Uterus (tissue), 4 donors: ENCODE measurements at regions of chr15 and their contacts with region 1.

Region 1: DNA sequence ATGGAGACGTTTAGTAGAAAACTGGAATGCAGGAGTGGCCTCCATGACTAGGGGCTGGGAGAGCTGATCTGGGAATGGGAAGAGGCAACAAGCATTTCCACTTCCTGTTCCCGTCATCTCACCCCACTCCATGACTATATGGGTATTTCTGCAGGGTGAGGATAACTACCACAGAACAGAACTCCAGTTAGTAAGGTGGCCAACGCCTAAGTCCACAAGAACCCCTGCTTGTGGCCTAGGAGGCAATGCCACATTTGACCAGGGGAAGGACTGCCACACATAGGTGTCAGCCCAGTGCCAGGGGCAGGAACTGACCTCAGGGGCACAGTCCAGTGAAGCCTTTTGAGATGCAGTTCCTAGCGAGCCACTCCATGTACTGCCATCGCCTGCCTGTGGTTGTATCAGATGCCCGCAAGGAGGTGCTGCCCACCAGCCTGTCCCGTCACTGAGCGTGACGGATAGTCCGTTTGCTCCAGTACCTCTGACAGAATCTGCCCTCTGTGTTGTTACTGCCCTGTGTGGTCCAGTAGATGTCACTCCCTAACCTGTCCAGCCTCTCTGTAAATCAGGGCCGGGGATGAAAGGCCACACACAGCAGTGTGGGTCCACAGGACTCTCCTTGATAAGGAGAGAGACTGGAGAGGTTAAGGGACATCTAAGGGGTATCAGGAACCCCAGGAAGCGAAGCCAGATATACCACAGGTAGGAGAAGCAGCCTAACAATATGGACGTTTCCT is 3.5 kb upstream of the MTFMT start:
- DNase-seq: peak; percentile 53 to 65
- H3K4me3 ChIP-seq: no peak overlapping the region
- H3K27ac ChIP-seq: no peak overlapping the region
- H3K4me1 ChIP-seq: no peaks in the 10 kb centered on the region
- H3K27me3 ChIP-seq: no peaks in the 10 kb centered on the region
- CTCF ChIP-seq: peak; percentile 45 to 69 (median 64)
- POLR2A ChIP-seq: no peak

Region 2: GRCh38 chr15:65086017-65086679 is 53.2 kb after region 1 on chr15:
- intact Hi-C with region 1: loop called (anchors 10 kb)
- DNase-seq: no peak
- H3K4me3 ChIP-seq: no peak overlapping the region
- H3K27ac ChIP-seq: peak overlapping the region; percentile 94 to 96
- H3K4me1 ChIP-seq: peaks cover 15 to 22% of the 10 kb centered on the region in 2 donors
- H3K27me3 ChIP-seq: no peaks in the 10 kb centered on the region
- CTCF ChIP-seq: peak in 3 of 4 experiments; percentile 10 to 23 (median 14)
- POLR2A ChIP-seq: no peak